ENCODE measurements at regions of chr15 and their contacts with region 1.

Region 1: GRCh38 chr15:63048115-63048775 is 5.7 kb downstream of the TPM1 start:
- DNase-seq: peak; percentile 79 to 93
- H3K4me3 ChIP-seq: peak overlapping the region; percentile 80
- H3K27ac ChIP-seq: peak overlapping the region; percentile 68
- H3K4me1 ChIP-seq: peaks cover 50% of the 10 kb centered on the region
- H3K27me3 ChIP-seq: no peaks in the 10 kb centered on the region
- CTCF ChIP-seq: peak; percentile 80

Region 2: DNA sequence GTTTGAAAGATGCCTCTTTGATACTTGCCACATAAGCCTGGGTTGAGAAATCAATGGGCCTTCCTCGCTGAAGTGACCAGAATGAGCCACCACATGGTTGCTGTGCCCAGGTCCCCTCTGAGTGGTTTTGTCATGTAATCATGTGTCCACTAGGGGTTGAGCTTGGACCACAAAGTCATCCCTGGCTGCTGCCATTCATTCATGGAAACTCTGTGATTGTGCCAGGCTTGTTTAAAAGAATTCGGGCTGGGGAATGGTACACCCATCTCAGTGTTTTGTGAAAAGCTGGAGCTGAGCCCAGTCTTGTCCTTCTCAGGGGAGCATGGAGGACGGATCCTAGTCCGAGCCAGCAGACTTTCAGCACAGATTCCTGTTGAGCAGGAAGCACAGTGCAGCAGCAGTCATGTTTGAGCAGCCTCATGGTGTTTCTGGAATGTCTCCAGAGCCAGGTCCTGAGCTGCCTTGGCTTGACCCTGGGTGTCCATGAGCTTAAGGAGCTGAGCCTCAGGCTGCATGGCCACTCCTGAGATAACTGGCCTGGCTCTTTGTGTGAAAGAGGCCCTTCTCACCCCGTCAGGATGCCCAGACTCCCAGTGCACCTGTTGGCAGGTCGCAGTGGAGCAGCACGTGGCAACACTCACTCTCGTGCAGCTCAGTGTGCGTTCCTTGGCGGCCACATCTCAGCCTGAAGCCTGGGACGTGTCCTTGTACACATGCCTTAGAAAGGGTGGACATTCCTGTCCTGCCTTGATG is 266.0 kb before region 1 on chr15:
- CTCF ChIA-PET with region 1: interaction called, 8 read pairs
- POLR2A ChIA-PET with region 1: no interaction called
- intact Hi-C with region 1: loop called (anchors 1 kb)
- DNase-seq: peak; percentile 63 to 78
- H3K4me3 ChIP-seq: no peak overlapping the region
- H3K27ac ChIP-seq: peak overlapping the region; percentile 48; the same call in 1 of the 2 replicates
- H3K4me1 ChIP-seq: peaks cover 11% of the 10 kb centered on the region
- H3K27me3 ChIP-seq: no peaks in the 10 kb centered on the region
- CTCF ChIP-seq: peak; percentile 80

Region 3: DNA sequence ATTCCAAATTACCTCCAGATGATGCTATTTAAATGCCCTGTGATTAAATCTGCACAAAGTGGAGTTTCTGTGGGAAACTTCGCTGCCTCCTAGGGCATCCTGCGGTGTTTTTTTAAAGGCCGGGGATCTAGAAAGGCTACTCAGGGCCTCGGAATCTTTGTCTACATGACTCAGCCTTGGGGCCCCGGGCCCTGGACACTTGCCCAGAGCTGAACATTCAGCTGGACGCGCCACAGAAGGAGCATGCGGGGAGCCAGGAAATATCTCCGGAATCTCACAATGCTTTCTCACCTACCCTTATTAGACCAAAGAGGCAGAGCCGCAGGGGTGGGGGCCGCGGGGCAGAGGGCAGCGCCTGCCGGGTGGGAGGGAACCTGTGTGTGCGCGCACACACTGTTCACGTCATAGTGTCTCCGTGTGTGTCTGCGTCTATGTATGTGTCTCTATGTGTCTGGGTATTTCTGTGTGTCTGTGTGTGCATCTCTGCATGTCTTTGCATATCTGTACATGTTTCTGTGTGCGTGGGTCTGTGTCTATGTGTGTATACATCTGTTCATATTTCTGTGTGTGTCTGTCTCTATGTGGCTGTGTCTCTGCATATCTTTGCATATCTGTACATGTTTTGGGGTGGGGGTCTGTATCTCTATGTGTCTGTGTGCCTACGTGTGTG is 151.1 kb before region 1 on chr15:
- CTCF ChIA-PET with region 1: no interaction called
- POLR2A ChIA-PET with region 1: interaction called, 40 read pairs
- intact Hi-C with region 1: loop called (anchors 2 kb)
- DNase-seq: peak; percentile 93 to 97
- H3K4me3 ChIP-seq: peak overlapping the region; percentile 47; the same call in 1 of the 2 replicates
- H3K27ac ChIP-seq: peak overlapping the region; percentile 100
- H3K4me1 ChIP-seq: peaks cover 81% of the 10 kb centered on the region
- H3K27me3 ChIP-seq: no peaks in the 10 kb centered on the region
- CTCF ChIP-seq: no peak

Region 4: DNA sequence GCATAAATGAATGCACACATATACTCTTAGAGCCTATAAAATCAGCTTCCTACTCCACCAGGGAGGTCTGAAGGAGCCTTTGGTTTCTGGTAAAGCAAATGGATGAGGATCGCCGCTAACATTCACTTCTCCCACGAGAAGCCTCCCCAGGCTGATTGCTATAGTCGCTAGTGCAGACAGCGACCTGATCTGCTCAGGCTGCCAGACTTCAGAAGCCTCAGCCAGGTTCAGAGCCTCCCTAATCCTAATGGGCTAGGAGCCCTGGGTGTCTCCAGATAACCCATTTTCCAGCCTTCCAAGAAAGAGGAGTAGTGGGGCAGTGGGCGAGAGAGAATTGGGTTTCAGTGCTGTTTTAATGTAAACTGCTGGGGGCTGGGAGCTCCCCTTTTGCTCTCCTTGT is 29.7 kb after region 1 on chr15:
- CTCF ChIA-PET with region 1: interaction called, 5 read pairs
- POLR2A ChIA-PET with region 1: interaction called, 14 read pairs
- intact Hi-C with region 1: no loop called
- DNase-seq: no peak
- H3K4me3 ChIP-seq: no peak overlapping the region
- H3K27ac ChIP-seq: no peak overlapping the region
- H3K4me1 ChIP-seq: no peaks in the 10 kb centered on the region
- H3K27me3 ChIP-seq: no peaks in the 10 kb centered on the region
- CTCF ChIP-seq: no peak

Region 5: DNA sequence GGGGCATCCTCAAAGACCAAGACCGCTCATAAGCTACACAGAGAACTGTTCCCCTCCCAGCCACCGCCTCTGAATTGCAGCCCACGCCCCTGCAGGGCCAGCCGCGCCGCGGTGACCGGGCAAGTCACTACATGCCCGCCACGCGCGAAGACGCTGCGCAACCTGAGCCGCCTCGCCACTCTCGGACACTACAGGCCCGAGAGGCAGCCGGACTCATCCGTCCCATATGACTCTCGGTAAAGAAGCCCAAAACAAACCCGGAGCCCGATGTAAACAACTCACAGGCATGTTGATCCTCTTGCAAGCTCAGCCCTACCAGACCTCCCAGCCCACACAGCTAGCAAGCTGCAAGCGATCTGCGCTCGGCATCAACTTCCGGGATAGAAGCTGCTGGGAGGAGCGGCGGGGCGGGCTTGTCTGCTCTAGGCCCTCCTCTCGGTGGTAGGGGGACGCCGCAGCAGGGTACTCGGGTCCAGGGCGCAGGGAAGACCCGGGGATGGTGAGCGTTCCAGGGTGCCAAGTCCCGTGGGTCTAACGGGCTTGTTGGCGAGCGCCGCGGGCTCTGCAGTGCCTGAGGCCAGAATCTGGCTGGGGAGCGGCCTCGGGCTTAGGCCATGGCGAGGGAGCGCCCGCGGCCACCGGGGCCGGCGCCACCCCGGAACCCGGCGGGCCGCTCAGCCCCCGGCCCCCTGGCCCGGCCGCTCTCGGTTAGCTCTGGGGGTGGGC is 109.0 kb after region 1 on chr15 and contains the start of gene RPS27L:
- CTCF ChIA-PET with region 1: no interaction called
- POLR2A ChIA-PET with region 1: no interaction called
- intact Hi-C with region 1: loop called (anchors 2 kb)
- DNase-seq: peak; percentile 75 to 84
- H3K4me3 ChIP-seq: peak within 1 kb of the TSS; percentile 71
- H3K27ac ChIP-seq: peak within 1 kb of the TSS; percentile 61
- H3K4me1 ChIP-seq: peaks cover 13% of the 10 kb centered on the region
- H3K27me3 ChIP-seq: no peaks in the 10 kb centered on the region
- CTCF ChIP-seq: no peak
- total RNA-seq, gene RPS27L: 59.7 and 77.0 TPM in 2 replicates

Region 6: DNA sequence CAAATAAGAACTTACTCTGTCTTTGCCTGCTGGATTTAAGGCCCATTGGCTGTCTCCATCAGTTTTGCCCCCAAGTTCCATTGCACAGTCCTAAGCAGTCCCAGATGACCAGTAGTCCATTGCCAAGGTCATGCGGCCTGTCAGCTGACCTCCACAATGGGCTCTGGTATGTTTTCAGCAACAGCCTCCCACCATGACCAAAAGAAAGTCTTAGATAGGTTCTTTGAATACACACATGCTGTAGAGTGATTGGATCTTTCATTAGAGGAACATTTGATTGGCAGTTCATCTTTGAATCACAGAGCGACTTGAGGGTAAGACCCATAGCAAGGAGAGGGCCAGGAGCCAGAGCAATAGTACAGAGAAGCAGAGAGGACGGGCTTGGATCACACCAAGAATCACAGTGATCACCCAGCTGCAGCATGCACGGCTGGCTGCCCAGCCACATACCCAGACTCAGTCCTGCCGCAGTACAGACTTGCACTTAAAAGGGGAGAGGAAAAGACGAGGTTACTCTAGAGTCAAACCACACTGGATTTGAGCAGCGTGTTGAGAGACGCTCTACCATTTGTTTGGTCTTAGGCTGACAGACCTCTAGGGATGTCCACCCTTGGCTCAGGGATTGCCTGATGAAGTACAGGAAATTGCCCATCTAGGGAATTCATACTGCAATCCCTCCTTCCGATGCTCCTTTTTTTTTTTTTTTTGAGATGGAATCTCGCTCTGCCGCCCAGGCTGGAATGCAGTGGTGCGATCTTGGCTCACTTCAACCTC is 279.6 kb after region 1 on chr15:
- CTCF ChIA-PET with region 1: no interaction called
- POLR2A ChIA-PET with region 1: interaction called, 11 read pairs
- intact Hi-C with region 1: no loop called
- DNase-seq: no peak
- H3K4me3 ChIP-seq: no peak overlapping the region
- H3K27ac ChIP-seq: no peak overlapping the region
- H3K4me1 ChIP-seq: no peaks in the 10 kb centered on the region
- H3K27me3 ChIP-seq: no peaks in the 10 kb centered on the region
- CTCF ChIP-seq: no peak

Measured in PC-9 (cell line).